Tibial artery (tissue), 4 donors: ENCODE measurements at regions of chr17 and their contacts with region 1.

Region 1: DNA sequence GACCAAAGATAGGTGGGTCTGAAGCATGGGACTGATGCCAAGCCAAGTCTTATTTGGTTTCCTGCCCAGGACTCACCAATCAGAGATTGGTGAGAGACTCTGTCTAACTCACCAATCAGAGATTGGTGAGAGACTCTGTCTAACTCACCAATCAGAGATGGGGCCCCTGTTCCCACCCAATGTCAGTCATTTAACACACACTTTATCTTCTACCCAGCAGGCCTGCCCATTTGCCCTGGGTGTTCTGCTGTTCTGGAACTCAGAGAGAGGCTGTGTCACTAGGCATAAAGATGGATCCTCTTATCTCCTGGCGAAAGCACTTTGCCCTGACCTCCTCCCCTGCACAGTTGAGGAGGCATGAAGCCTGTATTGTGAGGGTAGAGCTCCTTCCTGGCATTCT is 5.4 kb upstream of the RHOT1 start:
- DNase-seq: peak in 1 of 2 donors; percentile 15
- H3K4me3 ChIP-seq: no peak overlapping the region
- H3K27ac ChIP-seq: no peak overlapping the region
- H3K4me1 ChIP-seq: peaks cover 0 to 10% (median 0%) of the 10 kb centered on the region in 4 donors
- H3K27me3 ChIP-seq: no peaks in the 10 kb centered on the region
- CTCF ChIP-seq: no peak

Region 2: DNA sequence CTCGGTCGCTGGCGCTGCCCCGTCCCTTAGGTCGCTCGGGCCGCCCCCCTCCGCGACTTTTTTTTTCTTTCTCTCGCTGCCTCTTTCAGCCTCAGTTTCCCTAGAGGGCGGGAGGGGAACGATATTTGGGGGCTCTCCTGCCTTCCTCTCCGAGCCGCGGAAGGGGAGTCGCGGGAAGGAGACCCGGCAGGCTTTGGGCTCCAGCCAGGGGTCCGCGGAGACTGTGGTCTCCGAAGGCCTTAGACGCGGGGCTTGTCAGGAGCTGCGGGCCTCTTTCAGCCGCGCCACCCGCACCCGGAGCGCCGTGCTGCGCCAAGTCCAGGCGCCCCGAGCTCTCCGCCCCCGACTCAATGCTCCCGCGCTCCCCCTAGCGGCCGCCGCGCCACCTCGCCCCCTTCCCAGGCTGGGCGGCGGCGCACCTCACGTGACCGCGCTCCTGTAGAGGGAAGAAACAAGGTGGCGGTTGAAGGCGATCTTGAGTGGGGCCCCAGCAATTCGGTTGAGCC is 129.8 kb before region 1 on chr17 and contains the start of gene LRRC37B:
- intact Hi-C with region 1: loop called (anchors 10 kb)
- DNase-seq: peak; percentile 88 to 92
- H3K4me3 ChIP-seq: peak within 1 kb of the TSS; percentile 71
- H3K27ac ChIP-seq: peak within 1 kb of the TSS; percentile 76 to 77
- H3K4me1 ChIP-seq: peaks cover 0 to 19% (median 14%) of the 10 kb centered on the region in 4 donors
- H3K27me3 ChIP-seq: no peaks in the 10 kb centered on the region
- CTCF ChIP-seq: peak; percentile 96 to 98